ENCODE measurements at regions of chr9 and their contacts with region 1.

Region 1: DNA sequence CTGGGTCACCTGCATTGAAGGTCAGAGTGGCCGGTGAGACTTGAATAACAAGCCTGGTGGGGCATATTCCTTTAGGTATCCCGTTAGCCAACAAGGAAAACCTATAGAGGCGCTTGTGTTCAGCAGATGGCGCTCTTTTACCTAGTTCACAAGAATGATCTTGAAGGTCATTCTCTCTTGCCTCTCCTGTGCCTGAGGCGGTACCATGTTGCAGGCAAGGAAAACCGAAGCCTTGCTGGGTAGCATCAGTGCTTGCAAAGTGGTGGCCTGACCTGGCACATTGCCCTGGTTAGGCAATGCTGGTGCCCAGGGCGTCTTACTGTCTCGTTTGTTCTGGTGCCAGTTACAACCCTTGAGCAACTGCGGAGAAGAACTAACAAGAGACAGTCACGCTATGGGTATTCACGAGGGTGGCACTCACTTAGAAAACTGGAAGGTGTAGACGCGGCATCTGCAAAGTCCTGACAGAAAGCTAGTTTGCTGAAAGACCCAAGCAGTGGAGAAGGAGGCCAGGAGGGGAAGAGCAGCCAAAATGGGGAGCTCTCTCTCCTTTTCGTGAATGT is 56.7 kb downstream of the AOPEP start:
- DNase-seq: peak; percentile 99
- H3K4me3 ChIP-seq: no peak overlapping the region
- H3K27ac ChIP-seq: peak overlapping the region; percentile 1
- H3K4me1 ChIP-seq: peaks cover 8% of the 10 kb centered on the region
- H3K27me3 ChIP-seq: no peaks in the 10 kb centered on the region
- CTCF ChIP-seq: peak; percentile 73 to 80

Region 2: DNA sequence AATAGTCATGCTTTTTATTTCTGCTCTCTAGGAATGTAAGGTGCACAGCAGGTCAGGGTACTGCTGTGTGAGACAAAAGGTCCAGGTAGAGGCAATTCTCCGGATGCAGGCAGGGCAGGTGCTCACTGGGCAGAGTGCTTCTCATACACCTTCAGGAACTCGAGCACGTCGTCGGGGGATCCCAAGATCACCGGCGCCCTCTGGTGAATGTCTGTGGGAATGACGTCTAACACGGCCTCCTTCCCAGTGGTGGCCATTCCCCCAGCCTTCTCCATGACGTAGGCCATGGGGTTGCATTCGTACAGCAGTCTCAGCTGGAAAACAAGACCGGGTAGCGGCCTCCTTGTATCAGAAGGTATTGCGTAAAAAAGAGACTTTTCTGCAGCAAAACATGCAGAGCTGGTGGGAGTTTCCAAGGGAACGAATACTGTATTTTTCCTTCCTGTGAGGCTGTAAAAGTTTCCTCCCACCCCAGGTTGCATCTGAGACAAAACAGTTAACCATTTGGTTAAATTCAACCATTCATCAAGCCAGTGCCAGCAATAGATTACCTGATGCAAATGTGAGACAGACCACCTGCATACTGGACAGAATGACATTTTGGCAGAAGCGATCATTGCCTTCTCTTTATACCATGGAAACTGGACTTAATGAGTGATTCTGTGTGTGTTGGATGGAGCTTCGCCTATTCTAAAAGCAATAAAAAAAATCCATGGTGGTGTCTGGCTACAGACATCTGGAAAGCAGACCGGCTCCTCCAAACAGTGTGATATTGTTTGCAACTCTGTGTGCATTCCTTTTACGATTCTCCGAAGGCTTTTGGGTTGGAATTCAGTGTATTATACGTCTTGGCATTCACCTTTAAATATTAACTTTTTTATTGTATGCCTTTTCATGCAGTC is 179.7 kb before region 1 on chr9:
- CTCF ChIA-PET with region 1: no interaction called
- dilution Hi-C with region 1: no loop called
- in situ Hi-C with region 1: no loop called
- intact Hi-C with region 1: no loop called
- DNase-seq: peak; percentile 70
- H3K4me3 ChIP-seq: no peak overlapping the region
- H3K27ac ChIP-seq: no peak overlapping the region
- H3K4me1 ChIP-seq: no peaks in the 10 kb centered on the region
- H3K27me3 ChIP-seq: peaks cover 5% of the 10 kb centered on the region
- CTCF ChIP-seq: peak; percentile 63 to 85

Region 3: DNA sequence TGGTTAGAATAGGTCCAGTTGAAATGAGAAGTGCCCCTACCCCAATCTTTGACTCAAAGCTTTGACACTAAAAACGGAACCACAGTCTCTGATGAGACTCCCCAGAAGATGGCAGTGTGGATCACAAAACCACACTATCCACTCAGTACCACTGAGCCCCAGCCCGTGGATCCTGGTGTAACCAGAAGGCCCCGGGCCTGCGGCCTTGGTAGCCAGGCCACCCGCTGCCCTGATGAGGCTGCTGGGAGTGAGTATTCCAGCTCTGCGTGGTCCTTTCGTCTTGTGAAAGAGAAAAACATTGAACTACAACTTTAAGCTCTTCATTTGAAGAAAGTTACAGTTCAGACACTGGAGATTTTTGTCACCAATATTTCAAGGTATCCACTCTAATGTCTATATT is 101.7 kb before region 1 on chr9:
- CTCF ChIA-PET with region 1: interaction called, 3 read pairs
- dilution Hi-C with region 1: loop called (anchors 5 kb)
- in situ Hi-C with region 1: loop called in 1 of 2 experiments (anchors 5 kb)
- intact Hi-C with region 1: loop called (anchors 1 kb)
- DNase-seq: peak; percentile 52
- H3K4me3 ChIP-seq: no peak overlapping the region
- H3K27ac ChIP-seq: no peak overlapping the region
- H3K4me1 ChIP-seq: no peaks in the 10 kb centered on the region
- H3K27me3 ChIP-seq: no peaks in the 10 kb centered on the region
- CTCF ChIP-seq: peak; percentile 54 to 71

Region 4: GRCh38 chr9:94734054-94734754 is 49.0 kb before region 1 on chr9:
- CTCF ChIA-PET with region 1: no interaction called
- dilution Hi-C with region 1: no loop called
- in situ Hi-C with region 1: no loop called
- intact Hi-C with region 1: no loop called
- DNase-seq: no peak
- H3K4me3 ChIP-seq: no peak overlapping the region
- H3K27ac ChIP-seq: no peak overlapping the region
- H3K4me1 ChIP-seq: no peaks in the 10 kb centered on the region
- H3K27me3 ChIP-seq: no peaks in the 10 kb centered on the region
- CTCF ChIP-seq: no peak

Region 5: GRCh38 chr9:94867281-94867841 is 84.2 kb after region 1 on chr9:
- CTCF ChIA-PET with region 1: no interaction called
- dilution Hi-C with region 1: no loop called
- in situ Hi-C with region 1: no loop called
- intact Hi-C with region 1: loop called (anchors 2 kb)
- DNase-seq: peak; percentile 77
- H3K4me3 ChIP-seq: peak overlapping the region in 1 of 3 experiments; percentile 0
- H3K27ac ChIP-seq: peak overlapping the region; percentile 88
- H3K4me1 ChIP-seq: peaks cover 45% of the 10 kb centered on the region
- H3K27me3 ChIP-seq: no peaks in the 10 kb centered on the region
- CTCF ChIP-seq: no peak

Region 6: DNA sequence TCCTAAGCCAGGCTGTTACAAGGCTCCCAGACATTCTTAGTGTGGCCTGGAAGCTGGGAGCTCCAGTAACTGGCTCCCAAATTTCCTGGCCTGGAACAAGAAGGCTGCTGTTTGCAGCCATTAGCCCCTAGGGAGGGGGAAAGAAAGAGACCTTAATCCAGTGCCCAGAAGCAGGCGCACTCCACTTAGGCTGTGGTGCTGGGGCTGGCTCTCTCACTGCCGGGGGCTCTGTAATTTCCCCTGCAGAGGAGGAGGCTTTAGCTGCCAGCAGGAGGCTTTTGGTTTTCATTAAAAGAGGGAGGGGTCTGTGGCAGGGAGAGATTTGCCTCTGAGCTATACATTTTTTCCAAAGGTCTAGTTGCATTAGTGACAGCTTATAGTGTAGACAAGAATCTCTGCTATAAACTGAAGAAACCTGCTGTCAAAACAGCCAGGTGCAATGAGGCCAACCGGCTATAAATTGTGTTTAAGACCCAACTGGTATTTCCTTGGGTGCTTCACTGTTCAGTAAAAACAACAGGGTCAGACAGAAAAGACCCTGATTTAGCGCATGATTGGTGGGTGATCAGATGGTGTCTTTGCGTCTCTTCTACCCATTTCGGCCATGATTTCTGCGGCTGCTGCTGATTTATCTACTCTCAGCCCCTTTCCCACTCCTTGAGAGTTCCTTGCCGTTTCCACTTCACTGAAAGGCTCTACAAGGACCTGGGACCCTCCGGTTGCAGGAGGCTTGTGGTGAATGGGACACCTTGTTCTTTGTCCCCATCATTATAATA is 198.0 kb after region 1 on chr9:
- CTCF ChIA-PET with region 1: no interaction called
- dilution Hi-C with region 1: no loop called
- in situ Hi-C with region 1: no loop called
- intact Hi-C with region 1: no loop called
- DNase-seq: no peak
- H3K4me3 ChIP-seq: no peak overlapping the region
- H3K27ac ChIP-seq: no peak overlapping the region
- H3K4me1 ChIP-seq: peaks cover 6% of the 10 kb centered on the region
- H3K27me3 ChIP-seq: no peaks in the 10 kb centered on the region
- CTCF ChIP-seq: no peak

Region 7: DNA sequence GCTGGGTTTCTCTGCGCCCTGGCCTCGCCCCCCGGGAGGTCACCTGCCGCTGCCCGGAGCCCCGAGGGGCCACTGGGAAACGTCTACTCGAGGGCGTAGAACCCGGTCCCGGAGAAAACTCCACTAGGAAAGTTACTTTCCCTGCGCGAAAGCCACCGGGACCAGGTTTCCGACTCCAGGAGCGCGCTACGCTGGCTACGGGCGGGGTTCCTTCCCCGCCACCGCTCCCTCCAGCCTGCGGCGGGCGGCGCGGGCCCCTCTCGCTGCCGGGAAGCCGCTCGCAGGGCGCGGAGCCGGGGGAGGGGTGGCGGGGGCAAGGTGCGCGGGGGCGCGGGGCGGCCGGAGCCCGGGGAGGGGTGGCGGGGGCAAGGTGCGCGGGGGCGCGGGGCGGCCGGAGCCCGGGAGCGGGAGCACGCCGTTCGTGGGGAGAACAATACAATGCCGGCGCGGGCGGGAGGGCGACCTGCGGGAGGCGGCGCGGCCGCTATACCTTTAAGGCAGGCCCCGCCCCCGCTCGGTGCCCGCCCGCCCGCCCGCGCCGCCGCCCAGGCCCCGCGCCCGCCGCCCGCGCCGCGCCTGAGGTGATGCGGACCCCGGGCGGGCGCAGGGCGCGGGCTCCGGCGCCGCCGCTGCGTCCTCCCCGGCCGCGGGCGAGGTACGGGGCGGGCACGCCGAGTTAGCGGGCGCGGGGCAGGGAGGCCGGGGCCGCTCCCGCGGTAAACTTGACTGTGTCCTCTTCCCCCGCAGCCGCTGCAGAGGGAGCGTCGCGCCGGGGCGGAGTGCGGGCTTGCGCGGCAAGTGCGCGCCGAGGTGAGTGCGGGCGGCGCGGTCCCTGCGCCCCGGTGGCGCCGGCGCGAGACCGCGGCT is 221.5 kb after region 1 on chr9:
- CTCF ChIA-PET with region 1: no interaction called
- dilution Hi-C with region 1: no loop called
- in situ Hi-C with region 1: no loop called
- intact Hi-C with region 1: loop called (anchors 1 kb)
- DNase-seq: peak; percentile 34
- H3K4me3 ChIP-seq: peak overlapping the region; percentile 79 to 95 (median 87)
- H3K27ac ChIP-seq: peak overlapping the region; percentile 88
- H3K4me1 ChIP-seq: peaks cover 40% of the 10 kb centered on the region
- H3K27me3 ChIP-seq: no peaks in the 10 kb centered on the region
- CTCF ChIP-seq: no peak

Region 8: DNA sequence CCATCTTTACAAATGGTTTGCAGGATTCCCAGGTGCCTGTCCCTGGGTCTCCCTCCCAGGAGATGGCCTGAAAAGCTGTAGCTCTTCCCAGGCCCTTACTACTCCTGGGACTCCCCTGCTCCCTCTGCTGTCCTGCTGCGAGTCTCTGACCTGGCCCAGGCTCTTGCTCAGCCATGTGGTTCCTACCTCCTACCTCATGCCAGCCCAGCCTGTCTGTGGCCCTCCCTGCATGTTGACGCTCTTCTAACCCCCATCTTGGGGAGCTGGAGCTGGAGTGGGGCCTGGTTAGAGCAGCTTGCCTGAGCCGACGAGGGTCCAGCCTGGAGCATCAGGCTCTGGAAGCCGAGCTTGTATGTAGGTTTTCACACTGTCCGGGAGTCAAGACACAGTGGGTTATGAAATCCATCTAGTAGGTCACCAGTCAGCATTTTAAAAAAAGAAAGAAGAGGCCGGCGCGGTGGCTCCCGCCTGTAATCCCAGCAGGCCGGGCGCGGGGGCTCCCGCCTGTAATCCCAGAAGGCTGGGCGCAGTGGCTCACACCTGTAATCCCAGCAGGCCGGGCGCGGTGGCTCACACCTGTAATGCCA is 289.9 kb after region 1 on chr9:
- CTCF ChIA-PET with region 1: no interaction called
- dilution Hi-C with region 1: no loop called
- in situ Hi-C with region 1: no loop called
- intact Hi-C with region 1: loop called (anchors 1 kb)
- DNase-seq: no peak
- H3K4me3 ChIP-seq: no peak overlapping the region
- H3K27ac ChIP-seq: no peak overlapping the region
- H3K4me1 ChIP-seq: no peaks in the 10 kb centered on the region
- H3K27me3 ChIP-seq: no peaks in the 10 kb centered on the region
- CTCF ChIP-seq: peak in 1 of 2 donors; percentile 48

Region 9: DNA sequence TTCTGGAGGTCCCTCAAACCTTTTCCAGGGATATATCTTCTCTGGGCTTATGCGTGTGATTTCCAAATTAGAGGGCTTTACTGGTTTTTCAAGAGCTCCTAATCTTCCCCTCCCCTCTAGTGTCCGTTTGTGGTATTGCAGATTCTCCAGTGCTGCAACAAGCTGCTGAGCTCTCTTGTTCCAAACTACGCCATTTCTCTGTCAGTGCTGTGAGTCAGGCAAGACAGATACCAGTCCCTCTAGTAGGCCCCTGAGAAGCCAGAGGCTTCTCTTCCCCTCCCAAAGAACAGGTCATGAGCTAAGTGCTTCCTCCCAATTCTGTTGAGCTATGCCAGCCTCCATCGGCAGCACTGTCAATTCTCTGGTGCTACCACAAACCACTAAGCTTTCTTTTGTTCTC is 384.8 kb after region 1 on chr9:
- CTCF ChIA-PET with region 1: no interaction called
- dilution Hi-C with region 1: no loop called
- in situ Hi-C with region 1: no loop called
- intact Hi-C with region 1: loop called (anchors 1 kb)
- DNase-seq: peak; percentile 81
- H3K4me3 ChIP-seq: no peak overlapping the region
- H3K27ac ChIP-seq: no peak overlapping the region
- H3K4me1 ChIP-seq: peaks cover 3% of the 10 kb centered on the region
- H3K27me3 ChIP-seq: no peaks in the 10 kb centered on the region
- CTCF ChIP-seq: peak; percentile 82 to 87